ENCODE measurements at regions of chr18 and their contacts with region 1.

Region 1: DNA sequence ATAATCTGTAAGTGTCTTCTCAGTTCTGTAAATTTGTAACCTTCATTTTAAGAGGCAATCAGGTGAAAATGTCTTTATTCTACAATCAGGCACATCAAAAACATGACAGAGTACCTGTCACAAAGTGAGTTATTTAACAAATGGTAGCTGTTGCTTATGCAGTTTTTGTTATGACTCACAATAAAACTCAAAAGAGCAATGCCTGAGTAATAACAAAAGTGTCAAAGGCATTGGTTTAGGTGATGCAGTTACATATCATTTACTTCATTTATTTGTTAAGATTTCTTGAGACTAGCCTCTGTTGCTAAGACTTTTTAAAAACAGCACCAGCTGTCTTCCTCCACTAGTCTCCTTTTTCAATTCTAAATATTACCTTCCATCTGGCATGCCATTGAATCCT is 177.8 kb downstream of the KIAA1328 start:
- DNase-seq: no peak
- ATAC-seq: no peak
- H3K4me3 ChIP-seq: no peak overlapping the region
- H3K27ac ChIP-seq: no peak overlapping the region
- H3K4me1 ChIP-seq: no peaks in the 10 kb centered on the region
- H3K27me3 ChIP-seq: no peaks in the 10 kb centered on the region
- CTCF ChIP-seq: no peak

Region 2: GRCh38 chr18:36169938-36170337 is 836.8 kb before region 1 on chr18:
- CTCF ChIA-PET with region 1: no interaction called
- POLR2A ChIA-PET with region 1: no interaction called
- in situ Hi-C with region 1: no loop called
- intact Hi-C with region 1: no loop called
- DNase-seq: no peak
- ATAC-seq: no peak
- H3K4me3 ChIP-seq: no peak overlapping the region
- H3K27ac ChIP-seq: no peak overlapping the region
- H3K4me1 ChIP-seq: no peaks in the 10 kb centered on the region
- H3K27me3 ChIP-seq: no peaks in the 10 kb centered on the region
- CTCF ChIP-seq: no peak

Region 3: GRCh38 chr18:36527740-36528455 is 478.8 kb before region 1 on chr18:
- CTCF ChIA-PET with region 1: no interaction called
- POLR2A ChIA-PET with region 1: no interaction called
- in situ Hi-C with region 1: no loop called
- intact Hi-C with region 1: no loop called
- DNase-seq: no peak
- ATAC-seq: no peak
- H3K4me3 ChIP-seq: no peak overlapping the region
- H3K27ac ChIP-seq: no peak overlapping the region
- H3K4me1 ChIP-seq: peaks cover 3% of the 10 kb centered on the region; the same call in 1 of the 2 replicates
- H3K27me3 ChIP-seq: no peaks in the 10 kb centered on the region
- CTCF ChIP-seq: no peak

Region 4: DNA sequence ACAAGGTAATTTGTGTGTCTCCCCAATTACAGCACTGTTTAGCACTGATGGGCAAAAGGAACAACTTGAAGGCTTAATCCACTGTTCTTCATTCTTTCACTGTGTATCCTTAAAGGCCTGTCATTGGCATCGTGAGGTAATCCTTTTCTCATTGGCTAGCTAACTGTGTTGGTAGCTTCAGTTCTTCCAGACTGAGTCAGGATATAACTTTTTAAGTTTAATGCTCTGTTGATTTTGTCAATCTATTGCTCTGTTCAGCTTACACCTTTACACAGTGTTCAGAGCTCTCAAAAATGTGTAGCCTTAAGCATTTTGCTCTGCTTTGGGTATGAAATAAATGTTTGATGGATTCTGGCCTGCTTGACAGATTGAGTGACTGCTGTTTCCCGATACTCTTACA is 29.6 kb before region 1 on chr18:
- CTCF ChIA-PET with region 1: interaction called, 12 read pairs
- POLR2A ChIA-PET with region 1: no interaction called
- in situ Hi-C with region 1: no loop called
- intact Hi-C with region 1: no loop called
- DNase-seq: no peak
- ATAC-seq: no peak
- H3K4me3 ChIP-seq: no peak overlapping the region
- H3K27ac ChIP-seq: no peak overlapping the region
- H3K4me1 ChIP-seq: no peaks in the 10 kb centered on the region
- H3K27me3 ChIP-seq: no peaks in the 10 kb centered on the region
- CTCF ChIP-seq: no peak

Region 5: DNA sequence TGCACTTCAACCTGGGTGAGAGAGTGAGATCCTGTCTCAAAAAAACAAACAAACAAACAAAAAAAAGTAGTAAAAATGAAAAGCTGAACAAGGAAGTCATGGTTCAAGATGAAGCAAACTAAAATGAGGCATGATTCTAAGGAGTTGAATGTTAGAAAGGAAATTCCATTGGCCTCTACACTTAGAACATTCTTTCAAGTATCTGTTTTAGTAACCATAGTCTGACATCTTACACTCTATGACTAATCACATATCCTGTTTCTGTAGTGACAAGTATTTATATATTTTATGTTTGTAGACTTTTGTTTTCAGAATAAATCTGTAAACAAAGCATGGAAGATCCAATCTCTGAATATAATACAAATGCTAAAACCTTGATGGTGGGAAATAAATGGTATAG is 13.7 kb before region 1 on chr18:
- CTCF ChIA-PET with region 1: no interaction called
- POLR2A ChIA-PET with region 1: interaction called, 10 read pairs
- in situ Hi-C with region 1: no loop called
- intact Hi-C with region 1: no loop called
- DNase-seq: no peak
- ATAC-seq: no peak
- H3K4me3 ChIP-seq: no peak overlapping the region
- H3K27ac ChIP-seq: no peak overlapping the region
- H3K4me1 ChIP-seq: no peaks in the 10 kb centered on the region
- H3K27me3 ChIP-seq: no peaks in the 10 kb centered on the region
- CTCF ChIP-seq: no peak